ENCODE measurements at regions of chr12 and their contacts with region 1.

Region 1: DNA sequence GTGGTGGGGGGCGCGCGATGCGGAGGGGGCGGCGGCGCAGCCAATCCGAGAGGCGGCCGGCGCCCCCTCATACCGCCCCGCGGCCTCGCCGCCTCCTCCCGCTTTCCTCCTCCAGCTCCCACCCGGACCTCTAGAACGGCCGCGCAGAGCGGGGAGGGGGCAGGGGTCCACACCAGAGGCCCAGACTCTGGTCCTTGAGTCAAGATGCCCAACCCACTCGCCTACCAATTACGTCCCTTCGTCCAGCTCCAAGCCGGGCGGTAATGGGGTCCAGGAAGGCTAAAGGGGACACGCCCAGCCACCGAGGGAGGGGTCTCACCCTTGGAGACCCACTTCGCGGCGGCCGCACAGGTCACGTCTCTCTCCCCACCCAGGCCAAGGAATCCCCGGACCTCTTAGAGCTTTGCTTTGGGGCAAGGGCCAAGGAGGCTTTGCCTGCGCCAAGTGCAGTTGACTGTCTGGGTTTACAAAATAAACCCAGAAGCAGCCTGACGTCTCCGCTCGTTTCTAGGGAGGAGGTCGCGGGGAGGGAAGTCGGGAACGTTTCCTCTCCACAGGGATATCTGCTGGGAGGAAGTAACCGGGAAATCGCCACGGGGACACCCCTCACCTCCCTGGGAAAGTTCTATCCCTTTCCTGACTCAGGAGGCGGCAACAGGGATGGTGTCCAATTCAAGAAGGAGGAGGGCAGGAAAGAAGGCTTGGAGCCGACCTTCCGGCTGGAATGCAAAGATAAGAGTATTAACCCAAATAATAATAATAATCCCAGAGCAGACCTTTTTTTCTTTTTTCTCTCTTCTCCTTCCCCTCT is 427 bp upstream of the AMIGO2 start:
- DNase-seq: peak in 2 of 3 donors; percentile 14 to 21
- H3K4me3 ChIP-seq: peak overlapping the region; percentile 56 to 88 (median 56)
- H3K4me3 Mint-ChIP-seq: peak overlapping the region; percentile 95 to 100
- H3K27ac ChIP-seq: peak overlapping the region in 1 of 2 donors; percentile 72
- H3K27ac Mint-ChIP-seq: peak overlapping the region; percentile 43 to 89 (median 86)
- H3K4me1 ChIP-seq: peaks cover 34 to 53% of the 10 kb centered on the region in 2 donors
- H3K4me1 Mint-ChIP-seq: peaks cover 54% of the 10 kb centered on the region
- H3K27me3 ChIP-seq: peaks cover 5 to 16% of the 10 kb centered on the region in 2 donors
- H3K27me3 Mint-ChIP-seq: peaks cover 15 to 22% (median 15%) of the 10 kb centered on the region in 3 donors
- CTCF ChIP-seq: no peak

Region 2: GRCh38 chr12:47216150-47216677 is 136.0 kb after region 1 on chr12:
- intact Hi-C with region 1: loop called in 1 of 2 experiments (anchors 5 kb)
- DNase-seq: peak; percentile 79 to 87 (median 81)
- H3K4me3 ChIP-seq: peak overlapping the region; percentile 25 to 55 (median 50)
- H3K4me3 Mint-ChIP-seq: peak overlapping the region; percentile 66 to 73
- H3K27ac ChIP-seq: peak overlapping the region; percentile 70 to 72
- H3K27ac Mint-ChIP-seq: peak overlapping the region; percentile 82 to 95 (median 88)
- H3K4me1 ChIP-seq: peaks cover 48 to 49% of the 10 kb centered on the region in 2 donors
- H3K4me1 Mint-ChIP-seq: peaks cover 53% of the 10 kb centered on the region
- H3K27me3 ChIP-seq: no peaks in the 10 kb centered on the region
- H3K27me3 Mint-ChIP-seq: peaks cover 0 to 1% (median 0%) of the 10 kb centered on the region in 3 donors
- CTCF ChIP-seq: no peak

Region 3: GRCh38 chr12:47312808-47313426 is 232.7 kb after region 1 on chr12:
- intact Hi-C with region 1: loop called in 1 of 2 experiments (anchors 10 kb)
- DNase-seq: peak; percentile 45 to 84 (median 62)
- H3K4me3 ChIP-seq: no peak overlapping the region
- H3K4me3 Mint-ChIP-seq: no peak overlapping the region
- H3K27ac ChIP-seq: no peak overlapping the region
- H3K27ac Mint-ChIP-seq: peak overlapping the region in 4 of 7 donors; percentile 49 to 83 (median 78)
- H3K4me1 ChIP-seq: peaks cover 11 to 27% of the 10 kb centered on the region in 2 donors
- H3K4me1 Mint-ChIP-seq: peaks cover 35% of the 10 kb centered on the region
- H3K27me3 ChIP-seq: no peaks in the 10 kb centered on the region
- H3K27me3 Mint-ChIP-seq: peaks cover 0 to 2% (median 0%) of the 10 kb centered on the region in 3 donors
- CTCF ChIP-seq: no peak

Region 4: DNA sequence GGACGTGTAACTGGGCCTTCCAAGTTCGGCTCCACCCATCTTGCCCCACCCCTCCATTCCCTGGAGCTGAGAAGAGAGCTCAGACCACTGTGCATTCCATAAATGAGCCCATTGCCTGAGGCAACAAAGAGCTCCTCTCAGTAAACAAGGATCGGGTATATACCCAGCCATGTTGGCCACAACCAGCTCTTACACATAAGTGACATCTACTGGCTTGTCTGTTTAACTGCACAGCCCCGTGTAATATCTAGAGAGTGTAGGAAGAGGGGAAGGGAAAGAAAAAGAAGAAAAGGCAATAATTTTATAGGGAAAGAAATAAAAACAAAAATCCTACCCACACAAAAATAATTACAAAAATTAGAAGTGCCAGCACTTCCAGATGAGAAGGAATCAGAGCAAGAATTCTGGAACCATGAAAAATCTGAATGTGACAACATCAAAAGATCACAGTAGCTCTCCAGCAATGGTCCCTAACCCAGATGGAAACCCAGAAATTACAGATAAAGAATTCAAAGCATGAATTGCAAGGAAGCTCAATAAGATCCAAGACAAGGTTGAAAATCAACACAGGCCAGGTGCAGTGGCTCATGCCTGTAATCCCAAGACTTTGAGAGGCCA is 317.6 kb after region 1 on chr12:
- intact Hi-C with region 1: loop called (anchors 2 to 10 kb)
- DNase-seq: peak; percentile 34 to 57 (median 53)
- H3K4me3 ChIP-seq: no peak overlapping the region
- H3K4me3 Mint-ChIP-seq: no peak overlapping the region
- H3K27ac ChIP-seq: no peak overlapping the region
- H3K27ac Mint-ChIP-seq: peak overlapping the region in 3 of 7 donors; percentile 27 to 63 (median 46)
- H3K4me1 ChIP-seq: peaks cover 9 to 17% of the 10 kb centered on the region in 2 donors
- H3K4me1 Mint-ChIP-seq: peaks cover 37% of the 10 kb centered on the region
- H3K27me3 ChIP-seq: no peaks in the 10 kb centered on the region
- H3K27me3 Mint-ChIP-seq: peaks cover 0 to 2% (median 0%) of the 10 kb centered on the region in 3 donors
- CTCF ChIP-seq: peak; percentile 70

Region 5: DNA sequence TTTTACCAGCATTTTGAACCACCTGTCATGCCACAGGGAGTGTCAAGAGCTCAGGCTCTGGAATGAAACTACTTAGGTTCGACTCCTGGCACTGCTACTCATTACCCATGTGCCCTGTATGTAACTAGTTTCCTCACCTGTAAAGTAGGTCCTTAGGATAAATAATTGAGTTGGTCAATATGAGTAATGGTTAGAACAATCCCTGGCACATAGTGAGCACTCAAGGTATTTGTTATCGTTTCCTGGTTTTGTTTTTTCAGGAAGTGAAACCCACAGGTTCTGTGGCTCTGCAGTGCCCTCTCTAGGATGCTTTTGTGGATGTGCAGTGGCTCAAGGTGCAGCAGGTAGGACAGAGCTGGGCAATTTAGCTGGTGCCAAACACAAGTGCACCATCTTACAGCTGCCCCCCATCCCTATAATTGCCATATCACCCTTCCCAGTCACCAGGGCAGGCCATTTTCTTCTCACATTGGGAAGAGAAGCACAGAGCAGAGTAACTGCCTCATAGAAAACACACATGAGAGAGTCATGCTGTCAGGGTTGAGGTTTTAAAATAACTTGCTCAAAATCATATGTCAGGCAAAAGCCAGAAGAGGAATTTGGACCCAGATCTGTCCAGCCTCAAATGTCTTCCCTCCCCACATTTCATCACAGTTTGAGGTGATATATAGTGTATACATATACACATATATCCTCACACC is 328.1 kb after region 1 on chr12:
- intact Hi-C with region 1: no loop called
- DNase-seq: peak; percentile 42 to 70 (median 61)
- H3K4me3 ChIP-seq: no peak overlapping the region
- H3K4me3 Mint-ChIP-seq: no peak overlapping the region
- H3K27ac ChIP-seq: no peak overlapping the region
- H3K27ac Mint-ChIP-seq: no peak overlapping the region
- H3K4me1 ChIP-seq: no peaks in the 10 kb centered on the region
- H3K4me1 Mint-ChIP-seq: peaks cover 3% of the 10 kb centered on the region
- H3K27me3 ChIP-seq: no peaks in the 10 kb centered on the region
- H3K27me3 Mint-ChIP-seq: peaks cover 1 to 6% (median 5%) of the 10 kb centered on the region in 3 donors
- CTCF ChIP-seq: peak; percentile 61

Measured in CD14-positive monocyte (primary cell).